Activated CD4-positive, alpha-beta memory T cell treated with anti-CD3 and anti-CD28 coated beads for 36 hours (primary cell): ENCODE measurements at regions of chr11 and their contacts with region 1.

Region 1: DNA sequence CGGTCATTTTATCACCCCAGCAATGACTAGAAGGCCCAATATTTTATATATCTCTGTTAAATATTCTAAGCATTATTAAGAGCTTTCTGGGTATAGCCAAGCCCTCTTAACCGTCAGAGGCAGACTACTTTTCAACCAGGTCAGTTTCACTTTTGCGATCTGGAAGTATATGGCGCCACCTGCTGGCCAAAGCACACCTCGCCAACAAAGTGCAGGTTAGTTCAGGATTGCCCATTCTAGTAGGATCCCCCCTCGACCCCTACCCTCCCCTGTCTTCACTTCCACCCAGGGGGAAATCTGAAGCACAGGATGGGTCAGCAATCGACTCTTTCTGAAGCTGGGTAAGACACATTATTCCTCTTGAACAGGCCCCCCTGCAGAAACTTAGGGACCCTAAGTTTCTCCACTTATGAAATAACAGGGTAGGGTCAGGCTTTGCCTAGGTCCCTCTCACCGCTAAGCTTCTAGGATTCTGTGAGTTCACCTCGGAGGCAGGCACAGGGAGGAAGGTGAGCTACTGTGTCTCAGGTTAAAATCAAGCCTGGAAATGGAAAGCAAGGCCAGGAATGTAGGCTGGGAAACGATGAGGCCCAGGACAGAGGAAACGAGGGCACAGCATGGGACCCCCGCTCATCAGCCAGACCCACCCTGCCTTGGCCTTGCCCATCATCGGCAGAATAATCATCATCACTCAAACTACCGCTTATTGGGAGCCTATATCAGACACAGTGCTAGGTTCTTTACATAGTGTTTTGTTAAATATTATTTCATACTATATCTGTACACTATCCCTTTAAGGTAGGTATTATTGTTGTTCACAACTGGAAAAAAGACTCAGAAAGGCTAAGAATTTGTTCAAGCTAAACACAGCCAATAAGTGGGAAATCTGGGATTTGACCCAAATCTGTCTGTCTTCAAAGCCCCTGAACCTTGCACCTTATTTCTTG is 35.6 kb downstream of the KCNJ1 start:
- DNase-seq: peak; percentile 93
- H3K4me3 Mint-ChIP-seq: peak overlapping the region; percentile 30
- H3K27ac Mint-ChIP-seq: peak overlapping the region; percentile 89
- H3K4me1 Mint-ChIP-seq: peaks cover 19% of the 10 kb centered on the region
- H3K27me3 Mint-ChIP-seq: no peaks in the 10 kb centered on the region

Region 2: DNA sequence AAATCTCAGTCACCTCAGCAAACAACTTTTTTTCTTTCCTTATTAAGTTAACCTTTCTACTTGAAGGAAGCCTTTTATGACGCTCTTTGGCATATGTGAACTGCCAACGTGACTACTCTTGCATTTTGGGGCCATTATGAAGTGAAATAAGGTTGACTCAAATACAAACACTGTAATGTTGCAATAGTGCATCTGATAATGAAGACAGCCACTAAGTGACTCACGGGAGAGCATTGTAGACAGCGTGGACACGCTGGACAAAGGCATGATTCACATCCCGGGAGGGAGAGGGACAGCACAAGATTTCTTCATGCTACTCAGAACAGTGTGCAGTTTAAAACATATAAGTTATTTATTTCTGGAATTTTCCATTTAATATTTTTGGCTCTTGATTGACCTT is 804.9 kb before region 1 on chr11:
- CTCF ChIA-PET with region 1: interaction called, 7 read pairs
- POLR2A ChIA-PET with region 1: no interaction called
- intact Hi-C with region 1: loop called (anchors 1 kb)
- DNase-seq: no peak
- H3K4me3 Mint-ChIP-seq: no peak overlapping the region
- H3K27ac Mint-ChIP-seq: no peak overlapping the region
- H3K4me1 Mint-ChIP-seq: peaks cover 9% of the 10 kb centered on the region
- H3K27me3 Mint-ChIP-seq: peaks cover 3% of the 10 kb centered on the region

Region 3: GRCh38 chr11:128678024-128678423 is 153.4 kb before region 1 on chr11:
- CTCF ChIA-PET with region 1: no interaction called
- POLR2A ChIA-PET with region 1: no interaction called
- intact Hi-C with region 1: no loop called
- DNase-seq: no peak
- H3K4me3 Mint-ChIP-seq: no peak overlapping the region
- H3K27ac Mint-ChIP-seq: no peak overlapping the region
- H3K4me1 Mint-ChIP-seq: peaks cover 16% of the 10 kb centered on the region
- H3K27me3 Mint-ChIP-seq: no peaks in the 10 kb centered on the region

Region 4: GRCh38 chr11:128695539-128696221 is 135.8 kb before region 1 on chr11:
- CTCF ChIA-PET with region 1: interaction called, 4 read pairs
- POLR2A ChIA-PET with region 1: interaction called, 4 read pairs
- intact Hi-C with region 1: loop called (anchors 2 kb)
- DNase-seq: peak; percentile 55
- H3K4me3 Mint-ChIP-seq: peak overlapping the region; percentile 78
- H3K27ac Mint-ChIP-seq: peak overlapping the region; percentile 89
- H3K4me1 Mint-ChIP-seq: peaks cover 57% of the 10 kb centered on the region
- H3K27me3 Mint-ChIP-seq: peaks cover 5% of the 10 kb centered on the region

Region 5: DNA sequence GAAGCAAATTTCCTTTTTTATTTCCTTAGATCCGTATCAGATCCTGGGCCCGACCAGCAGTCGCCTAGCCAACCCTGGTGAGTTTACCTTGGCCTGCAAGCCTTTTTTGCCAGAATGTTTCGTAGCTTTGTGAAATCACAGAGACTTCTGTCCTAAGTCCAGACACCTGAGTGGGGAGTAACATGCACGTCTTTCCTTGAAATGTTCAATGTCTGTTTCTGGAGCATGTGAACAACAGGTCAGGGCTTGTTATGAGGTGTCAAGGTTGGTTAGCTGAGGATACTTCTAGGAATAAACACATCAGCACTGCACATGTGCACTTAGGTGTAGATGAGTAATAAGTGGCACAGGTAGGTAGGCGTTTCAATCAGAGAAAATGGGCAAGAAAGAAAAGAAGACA is 22.3 kb before region 1 on chr11:
- CTCF ChIA-PET with region 1: interaction called, 18 read pairs
- POLR2A ChIA-PET with region 1: no interaction called
- intact Hi-C with region 1: no loop called
- DNase-seq: no peak
- H3K4me3 Mint-ChIP-seq: no peak overlapping the region
- H3K27ac Mint-ChIP-seq: peak overlapping the region; percentile 47
- H3K4me1 Mint-ChIP-seq: peaks cover 37% of the 10 kb centered on the region
- H3K27me3 Mint-ChIP-seq: no peaks in the 10 kb centered on the region

Region 6: DNA sequence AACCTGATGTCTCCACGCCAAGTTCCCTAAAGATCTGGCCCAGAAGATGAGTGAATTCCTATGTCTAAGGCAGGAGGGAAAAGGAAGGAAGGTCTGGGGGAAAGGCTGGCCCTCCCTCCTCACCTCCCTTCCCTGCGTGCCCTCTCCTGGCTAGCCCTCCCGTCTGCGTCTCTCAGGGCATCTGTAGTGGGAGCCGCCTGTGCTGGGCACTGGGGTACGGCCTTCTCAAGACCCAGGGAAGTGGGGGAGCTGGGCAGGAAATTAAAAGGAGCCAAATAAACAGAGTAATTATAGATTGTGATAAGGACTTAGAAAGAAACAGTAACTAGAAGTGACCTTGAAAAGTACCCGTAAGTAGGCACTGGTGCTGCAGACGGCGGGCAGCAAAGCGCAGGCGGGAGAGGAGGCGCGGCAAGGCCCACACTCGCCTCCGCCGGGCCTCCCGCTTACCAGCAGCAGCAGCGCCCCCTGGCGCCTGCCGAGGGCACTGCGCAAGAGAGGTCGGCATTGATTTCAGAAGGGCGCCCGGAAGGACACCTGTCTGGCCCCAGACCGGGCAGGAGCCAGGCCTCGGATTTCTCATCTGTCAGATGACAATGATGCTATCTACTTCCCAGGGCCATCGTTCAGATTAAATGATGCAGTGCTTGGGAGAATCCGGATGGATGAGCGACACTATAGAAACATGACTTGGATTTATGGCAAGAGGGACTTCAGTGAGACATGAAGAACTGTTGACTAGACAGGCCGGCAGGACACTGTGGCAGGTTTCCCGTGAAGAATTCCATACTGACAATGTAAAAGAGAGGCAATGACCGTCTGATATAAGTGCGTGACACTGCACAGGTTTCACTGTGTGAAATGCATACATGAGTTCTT is 28.4 kb after region 1 on chr11:
- CTCF ChIA-PET with region 1: interaction called, 14 read pairs
- POLR2A ChIA-PET with region 1: no interaction called
- intact Hi-C with region 1: loop called (anchors 1 kb)
- DNase-seq: peak; percentile 87
- H3K4me3 Mint-ChIP-seq: no peak overlapping the region
- H3K27ac Mint-ChIP-seq: no peak overlapping the region
- H3K4me1 Mint-ChIP-seq: peaks cover 4% of the 10 kb centered on the region
- H3K27me3 Mint-ChIP-seq: peaks cover 2% of the 10 kb centered on the region